ENCODE measurements at regions of chr1 and their contacts with region 1.

Region 1: DNA sequence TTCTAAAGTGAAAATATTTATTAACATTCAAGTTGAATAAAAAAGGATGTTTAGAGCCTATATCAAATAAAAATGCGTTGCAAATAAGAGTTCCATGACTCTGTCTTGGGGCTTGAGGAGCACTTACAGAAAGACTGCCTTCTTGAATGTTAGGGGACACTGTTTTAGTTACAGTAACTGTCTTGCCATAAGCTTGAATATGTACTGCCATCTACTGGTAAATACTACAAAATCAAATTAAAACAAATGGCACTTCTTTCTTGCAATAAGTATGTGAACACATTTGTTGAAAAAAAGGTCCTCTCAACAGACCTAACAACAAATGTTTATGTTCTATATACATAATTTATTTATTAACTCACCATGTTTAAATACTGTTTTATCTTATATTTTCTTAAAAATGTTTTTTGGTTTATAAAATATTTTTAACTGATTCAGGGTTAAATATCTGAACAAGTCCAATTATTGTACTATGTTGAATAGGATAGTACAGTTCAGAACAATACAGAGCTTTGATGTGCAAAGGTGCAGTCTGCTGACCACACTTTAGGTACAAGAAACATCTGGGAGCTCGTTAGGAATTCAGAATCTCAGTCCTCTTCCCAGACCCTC is 199.5 kb downstream of the LRRIQ3 start:
- DNase-seq: peak; percentile 17
- ATAC-seq: peak; percentile 54; the same call in 2 of the 3 replicates
- H3K4me3 ChIP-seq: no peak overlapping the region
- H3K27ac ChIP-seq: no peak overlapping the region
- H3K4me1 ChIP-seq: 0 out of 2 replicates have a peak, but pooled peaks cover 7% of the 10 kb centered on the region
- H3K27me3 ChIP-seq: no peaks in the 10 kb centered on the region; a peak in 1 of 5 replicates
- CTCF ChIP-seq: peak; percentile 55
- EP300 ChIP-seq: no peak
- POLR2A ChIP-seq: no peak
- RAD21 ChIP-seq: no peak

Region 2: DNA sequence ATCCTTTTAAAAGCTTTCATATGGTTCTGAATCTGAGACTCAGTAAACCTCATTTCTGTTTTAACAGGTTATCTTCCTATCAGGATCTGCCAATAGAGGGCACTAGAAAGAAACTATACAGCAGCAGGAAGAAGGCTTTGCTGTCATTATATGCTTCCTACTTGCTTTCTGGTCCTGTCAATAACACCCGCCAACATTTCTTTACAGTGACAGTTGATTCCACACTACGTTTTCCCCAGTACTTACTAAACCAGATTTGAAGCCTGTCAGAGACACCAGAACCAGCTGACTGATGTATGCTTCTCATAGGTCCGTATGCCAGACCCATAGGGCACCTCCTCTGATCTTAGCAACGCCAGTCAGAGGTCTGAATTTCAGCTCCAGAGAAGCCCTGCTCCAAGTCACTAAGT is 1375.2 kb before region 1 on chr1:
- CTCF ChIA-PET with region 1: no interaction called
- POLR2A ChIA-PET with region 1: no interaction called
- in situ Hi-C with region 1: no loop called
- intact Hi-C with region 1: loop called (anchors 2 kb)
- DNase-seq: peak; percentile 20
- ATAC-seq: peak; percentile 87
- H3K4me3 ChIP-seq: no peak overlapping the region
- H3K27ac ChIP-seq: no peak overlapping the region
- H3K4me1 ChIP-seq: no peaks in the 10 kb centered on the region
- H3K27me3 ChIP-seq: no peaks in the 10 kb centered on the region
- CTCF ChIP-seq: peak; percentile 64
- EP300 ChIP-seq: no peak
- POLR2A ChIP-seq: no peak
- RAD21 ChIP-seq: 0 out of 2 replicates have a peak, but pooled peaks have one; percentile 15

Region 3: DNA sequence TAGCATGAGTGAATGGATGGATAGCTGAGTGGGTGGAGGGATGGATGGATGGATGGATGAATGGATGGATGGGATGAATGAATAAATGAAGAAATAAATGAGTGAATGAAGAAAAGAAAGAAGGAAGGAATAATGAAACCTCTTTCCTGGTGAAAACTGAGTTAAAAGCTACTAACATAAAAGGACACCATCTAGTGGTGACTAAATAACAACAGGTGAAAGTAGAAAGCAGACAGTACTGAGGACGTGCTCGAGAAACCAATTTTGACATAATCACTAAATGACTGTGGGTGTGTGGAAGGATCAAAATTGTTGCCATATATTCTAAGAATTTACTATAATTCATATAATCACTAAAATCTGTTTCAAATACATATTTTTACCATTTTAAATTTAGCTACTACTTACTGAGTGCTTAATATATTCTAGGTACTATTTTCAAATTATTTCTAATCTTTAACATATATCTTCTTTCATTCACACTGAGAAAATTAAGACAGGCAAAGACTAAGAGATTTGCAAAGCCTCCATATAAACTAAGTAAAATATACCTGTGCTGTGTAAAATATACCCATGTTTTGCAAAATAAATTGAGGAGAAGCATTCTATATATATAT is 323.4 kb before region 1 on chr1:
- CTCF ChIA-PET with region 1: no interaction called
- POLR2A ChIA-PET with region 1: no interaction called
- in situ Hi-C with region 1: no loop called
- intact Hi-C with region 1: loop called (anchors 5 kb)
- DNase-seq: no peak
- ATAC-seq: no peak; the same call in 2 of the 3 replicates
- H3K4me3 ChIP-seq: no peak overlapping the region
- H3K27ac ChIP-seq: no peak overlapping the region
- H3K4me1 ChIP-seq: no peaks in the 10 kb centered on the region
- H3K27me3 ChIP-seq: no peaks in the 10 kb centered on the region
- CTCF ChIP-seq: peak; percentile 31
- EP300 ChIP-seq: no peak
- POLR2A ChIP-seq: no peak
- RAD21 ChIP-seq: no peak

Region 4: DNA sequence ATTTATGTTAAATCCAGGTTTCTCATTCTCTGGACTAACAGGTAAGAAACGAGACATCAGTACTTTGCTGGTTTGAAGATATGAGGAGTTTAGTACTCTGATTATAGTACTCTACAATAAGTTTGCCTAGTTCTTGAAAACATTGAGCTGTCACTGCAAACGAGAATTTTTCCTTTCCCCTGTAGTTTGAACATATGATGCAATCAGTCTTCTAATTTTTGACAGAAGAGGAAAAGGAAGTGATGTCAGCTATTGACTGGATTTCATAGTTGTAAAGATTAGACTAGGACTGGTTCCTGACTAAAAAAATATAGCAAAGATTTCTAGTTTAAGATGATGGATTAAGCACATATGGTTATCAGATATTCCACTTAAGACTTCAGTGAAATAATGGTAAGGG is 262.3 kb before region 1 on chr1:
- CTCF ChIA-PET with region 1: no interaction called
- POLR2A ChIA-PET with region 1: no interaction called
- in situ Hi-C with region 1: no loop called
- intact Hi-C with region 1: no loop called
- DNase-seq: no peak
- ATAC-seq: no peak
- H3K4me3 ChIP-seq: no peak overlapping the region
- H3K27ac ChIP-seq: no peak overlapping the region
- H3K4me1 ChIP-seq: no peaks in the 10 kb centered on the region
- H3K27me3 ChIP-seq: no peaks in the 10 kb centered on the region
- CTCF ChIP-seq: no peak
- EP300 ChIP-seq: no peak
- POLR2A ChIP-seq: no peak
- RAD21 ChIP-seq: no peak

Region 5: GRCh38 chr1:73839922-73840321 is 158.5 kb before region 1 on chr1:
- CTCF ChIA-PET with region 1: interaction called, 8 read pairs
- POLR2A ChIA-PET with region 1: no interaction called
- in situ Hi-C with region 1: no loop called
- intact Hi-C with region 1: loop called (anchors 1 kb)
- DNase-seq: peak; percentile 1
- ATAC-seq: no peak
- H3K4me3 ChIP-seq: no peak overlapping the region
- H3K27ac ChIP-seq: no peak overlapping the region
- H3K4me1 ChIP-seq: no peaks in the 10 kb centered on the region
- H3K27me3 ChIP-seq: no peaks in the 10 kb centered on the region
- CTCF ChIP-seq: peak; percentile 41; the same call in 1 of the 2 replicates
- EP300 ChIP-seq: no peak
- POLR2A ChIP-seq: no peak
- RAD21 ChIP-seq: no peak

Region 6: DNA sequence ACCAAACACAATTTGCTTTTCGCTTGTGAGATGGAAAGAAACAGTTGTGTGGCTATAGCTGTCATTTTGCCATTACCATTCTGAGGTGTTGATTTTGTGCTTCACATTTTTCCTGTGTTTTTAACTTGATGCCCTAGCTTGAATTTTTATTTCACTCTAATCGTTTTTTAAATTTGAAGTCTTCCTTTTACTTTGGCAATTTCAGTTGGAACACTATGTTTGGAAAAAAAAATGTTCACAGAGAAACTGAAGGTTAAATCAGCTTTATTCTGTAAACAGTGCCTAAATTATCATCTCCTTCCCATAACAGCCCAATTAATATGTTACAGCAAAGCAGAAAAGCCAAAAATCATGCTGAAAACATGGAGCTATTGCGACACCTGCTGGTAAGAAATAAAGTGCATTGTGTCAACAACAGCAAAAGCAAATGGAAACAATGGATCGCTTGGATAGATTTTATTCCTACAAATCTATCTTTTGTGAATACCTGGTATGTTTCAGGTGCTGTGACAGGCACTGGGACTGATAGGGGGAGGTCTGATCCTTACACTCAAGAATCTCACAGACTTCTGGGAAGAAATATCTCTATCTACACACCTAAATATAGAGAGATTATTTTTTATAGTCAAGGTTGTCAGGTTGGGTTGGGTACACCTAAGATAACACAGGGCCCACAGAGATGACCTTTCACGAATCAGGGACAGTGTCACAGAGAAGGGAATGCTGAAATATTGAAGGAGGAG is 691.3 kb after region 1 on chr1:
- CTCF ChIA-PET with region 1: no interaction called
- POLR2A ChIA-PET with region 1: no interaction called
- in situ Hi-C with region 1: no loop called
- intact Hi-C with region 1: loop called (anchors 5 kb)
- DNase-seq: peak; percentile 53
- ATAC-seq: peak; percentile 85
- H3K4me3 ChIP-seq: no peak overlapping the region
- H3K27ac ChIP-seq: no peak overlapping the region
- H3K4me1 ChIP-seq: peaks cover 8% of the 10 kb centered on the region
- H3K27me3 ChIP-seq: no peaks in the 10 kb centered on the region
- CTCF ChIP-seq: peak; percentile 85
- EP300 ChIP-seq: no peak
- POLR2A ChIP-seq: no peak
- RAD21 ChIP-seq: peak; percentile 60

Measured in HepG2 (cell line).